ENCODE measurements at regions of chr2 and their contacts with region 1.

Region 1: GRCh38 chr2:62330959-62331358 is 135.0 kb downstream of the B3GNT2 start:
- DNase-seq: no peak
- H3K4me3 ChIP-seq: no peak overlapping the region
- H3K27ac ChIP-seq: no peak overlapping the region
- H3K4me1 ChIP-seq: no peaks in the 10 kb centered on the region
- H3K27me3 ChIP-seq: no peaks in the 10 kb centered on the region
- CTCF ChIP-seq: no peak

Region 2: GRCh38 chr2:62304429-62305417 is 26.2 kb before region 1 on chr2:
- CTCF ChIA-PET with region 1: no interaction called
- POLR2A ChIA-PET with region 1: interaction called, 19 read pairs
- intact Hi-C with region 1: no loop called
- DNase-seq: peak; percentile 96
- H3K4me3 ChIP-seq: no peak overlapping the region
- H3K27ac ChIP-seq: peak overlapping the region; percentile 43
- H3K4me1 ChIP-seq: peaks cover 13% of the 10 kb centered on the region
- H3K27me3 ChIP-seq: no peaks in the 10 kb centered on the region
- CTCF ChIP-seq: no peak

Region 3: DNA sequence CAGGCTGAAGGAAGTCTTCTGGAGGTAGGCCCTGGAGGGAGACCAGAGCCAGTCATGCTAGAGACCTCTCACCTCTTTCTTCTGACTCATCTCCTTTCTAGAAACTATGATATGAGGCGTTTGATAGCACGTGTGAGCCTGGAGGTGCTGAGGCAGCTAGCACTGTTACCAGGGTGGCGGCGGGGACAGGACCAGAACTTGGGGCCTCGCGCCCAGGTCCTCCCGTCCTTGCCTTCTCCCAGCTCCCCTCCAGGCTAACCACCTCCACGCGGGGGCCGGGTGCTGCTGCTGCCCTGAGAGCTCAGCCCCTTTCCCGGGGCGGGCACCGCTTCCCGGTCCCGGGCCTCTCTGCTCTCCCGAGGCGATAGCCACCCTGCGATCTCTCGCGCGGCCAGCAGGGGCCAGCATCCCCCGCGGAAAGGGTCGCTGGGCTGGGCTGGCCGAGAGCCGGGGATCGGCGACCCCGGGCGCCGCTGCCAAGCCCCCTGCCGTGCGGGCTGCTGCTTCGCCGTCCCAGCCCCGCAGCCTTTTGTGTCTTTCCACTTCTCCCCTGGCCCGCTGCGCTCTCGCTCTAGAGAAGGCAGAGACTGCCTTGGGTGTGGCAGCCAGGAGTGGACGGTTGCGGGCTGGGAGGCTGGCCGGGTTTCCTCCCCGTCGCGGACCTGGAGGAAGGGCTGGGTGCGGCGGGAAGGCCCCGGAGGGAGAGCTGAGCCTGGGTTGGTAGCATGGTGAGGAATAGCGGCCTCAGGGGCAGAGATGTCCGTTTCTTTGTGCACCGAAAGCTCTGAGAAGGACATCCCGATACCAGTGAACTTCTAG is 126.0 kb after region 1 on chr2:
- CTCF ChIA-PET with region 1: no interaction called
- POLR2A ChIA-PET with region 1: no interaction called
- intact Hi-C with region 1: no loop called
- DNase-seq: peak; percentile 61
- H3K4me3 ChIP-seq: peak overlapping the region; percentile 63
- H3K27ac ChIP-seq: no peak overlapping the region
- H3K4me1 ChIP-seq: no peaks in the 10 kb centered on the region
- H3K27me3 ChIP-seq: no peaks in the 10 kb centered on the region
- CTCF ChIP-seq: peak; percentile 82